HEK293 (cell line): ENCODE measurements at regions of chr12 and their contacts with region 1.

Region 1: DNA sequence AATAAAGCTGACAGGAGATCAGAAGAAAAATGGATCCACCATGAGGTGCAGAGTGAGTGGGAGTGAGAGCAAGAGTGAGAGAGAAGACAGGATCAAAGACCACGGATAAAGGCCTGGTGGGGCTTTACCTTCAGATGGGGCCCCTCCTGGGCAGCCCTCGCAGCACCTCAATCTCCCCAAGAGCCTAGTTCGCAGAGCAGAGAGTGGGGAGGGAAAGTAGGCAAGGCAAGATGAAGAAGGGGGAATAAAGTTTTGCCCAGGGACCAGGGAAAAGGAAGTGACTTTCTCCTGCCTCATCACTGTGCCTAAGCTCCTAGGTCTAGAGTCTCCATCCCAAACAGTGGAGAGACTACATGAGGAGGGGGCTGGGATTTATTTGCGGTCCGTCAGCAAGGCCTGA is 10.3 kb downstream of the OR10P1 start:
- H3K4me3 ChIP-seq: no peak overlapping the region
- H3K27ac ChIP-seq: no peak overlapping the region; the same call in 1 of the 2 replicates
- H3K4me1 ChIP-seq: no peaks in the 10 kb centered on the region
- CTCF ChIP-seq: no peak

Region 2: GRCh38 chr12:54891717-54892554 is 755.1 kb before region 1 on chr12:
- CTCF ChIA-PET with region 1: no interaction called
- POLR2A ChIA-PET with region 1: no interaction called
- H3K4me3 ChIP-seq: no peak overlapping the region
- H3K27ac ChIP-seq: no peak overlapping the region; the same call in 1 of the 2 replicates
- H3K4me1 ChIP-seq: peaks cover 9% of the 10 kb centered on the region
- CTCF ChIP-seq: no peak

Region 3: DNA sequence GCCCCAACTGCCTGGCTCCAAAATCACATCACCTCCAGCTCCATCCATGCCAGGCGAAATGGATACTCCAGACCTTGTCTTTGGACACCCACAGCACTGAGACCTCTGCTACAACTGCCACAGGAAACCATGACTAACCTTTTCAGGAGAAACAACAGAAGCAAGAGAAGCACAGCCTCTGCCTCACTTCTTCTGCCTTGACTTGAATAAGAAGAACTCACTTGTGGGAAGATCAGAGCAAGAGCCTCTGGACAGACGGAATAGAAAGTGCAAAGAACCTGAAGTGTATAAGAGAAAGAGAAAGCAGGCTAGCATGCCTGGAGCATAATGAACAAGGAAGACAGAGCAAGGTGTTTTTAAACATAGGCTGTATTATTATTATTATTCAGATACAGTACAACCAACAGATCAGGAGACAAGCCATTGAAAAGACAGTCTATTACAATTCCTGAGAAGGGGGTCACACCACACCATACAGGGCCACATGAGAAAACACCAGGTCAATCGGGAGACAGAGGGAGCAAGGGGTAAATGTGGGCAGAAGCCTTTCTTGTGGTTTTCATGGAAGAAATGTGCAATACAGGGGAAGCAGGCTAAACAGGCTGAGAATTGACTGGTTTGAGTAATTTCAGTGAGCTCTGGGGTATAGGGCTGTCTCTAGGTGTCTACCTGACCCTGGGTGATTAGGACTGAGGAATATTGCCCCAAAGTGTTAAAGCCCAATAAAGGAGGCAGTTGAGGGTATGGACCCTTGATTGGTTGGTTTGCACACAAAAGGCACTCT is 17.8 kb before region 1 on chr12:
- CTCF ChIA-PET with region 1: interaction called, 29 read pairs
- POLR2A ChIA-PET with region 1: no interaction called
- H3K4me3 ChIP-seq: no peak overlapping the region
- H3K27ac ChIP-seq: no peak overlapping the region
- H3K4me1 ChIP-seq: no peaks in the 10 kb centered on the region
- CTCF ChIP-seq: no peak

Region 4: GRCh38 chr12:55636116-55636655 is 10.8 kb before region 1 on chr12:
- CTCF ChIA-PET with region 1: interaction called, 29 read pairs
- POLR2A ChIA-PET with region 1: no interaction called
- H3K4me3 ChIP-seq: no peak overlapping the region
- H3K27ac ChIP-seq: no peak overlapping the region
- H3K4me1 ChIP-seq: no peaks in the 10 kb centered on the region
- CTCF ChIP-seq: no peak

Region 5: GRCh38 chr12:55659486-55660385 is 12.7 kb after region 1 on chr12:
- CTCF ChIA-PET with region 1: interaction called, 115 read pairs
- POLR2A ChIA-PET with region 1: no interaction called
- H3K4me3 ChIP-seq: no peak overlapping the region
- H3K27ac ChIP-seq: no peak overlapping the region
- H3K4me1 ChIP-seq: no peaks in the 10 kb centered on the region
- CTCF ChIP-seq: peak; percentile 64

Region 6: GRCh38 chr12:55666538-55666937 is 19.5 kb after region 1 on chr12:
- CTCF ChIA-PET with region 1: interaction called, 11 read pairs
- POLR2A ChIA-PET with region 1: no interaction called
- H3K4me3 ChIP-seq: no peak overlapping the region
- H3K27ac ChIP-seq: no peak overlapping the region
- H3K4me1 ChIP-seq: no peaks in the 10 kb centered on the region
- CTCF ChIP-seq: no peak

Region 7: GRCh38 chr12:56078990-56079664 is 432.1 kb after region 1 on chr12:
- CTCF ChIA-PET with region 1: no interaction called
- POLR2A ChIA-PET with region 1: no interaction called
- H3K4me3 ChIP-seq: peak overlapping the region; percentile 40
- H3K27ac ChIP-seq: peak overlapping the region; percentile 64; the same call in 1 of the 2 replicates
- H3K4me1 ChIP-seq: no peaks in the 10 kb centered on the region; the same call in 1 of the 2 replicates
- CTCF ChIP-seq: peak; percentile 92